ENCODE measurements at regions of chr10 and their contacts with region 1.

Region 1: DNA sequence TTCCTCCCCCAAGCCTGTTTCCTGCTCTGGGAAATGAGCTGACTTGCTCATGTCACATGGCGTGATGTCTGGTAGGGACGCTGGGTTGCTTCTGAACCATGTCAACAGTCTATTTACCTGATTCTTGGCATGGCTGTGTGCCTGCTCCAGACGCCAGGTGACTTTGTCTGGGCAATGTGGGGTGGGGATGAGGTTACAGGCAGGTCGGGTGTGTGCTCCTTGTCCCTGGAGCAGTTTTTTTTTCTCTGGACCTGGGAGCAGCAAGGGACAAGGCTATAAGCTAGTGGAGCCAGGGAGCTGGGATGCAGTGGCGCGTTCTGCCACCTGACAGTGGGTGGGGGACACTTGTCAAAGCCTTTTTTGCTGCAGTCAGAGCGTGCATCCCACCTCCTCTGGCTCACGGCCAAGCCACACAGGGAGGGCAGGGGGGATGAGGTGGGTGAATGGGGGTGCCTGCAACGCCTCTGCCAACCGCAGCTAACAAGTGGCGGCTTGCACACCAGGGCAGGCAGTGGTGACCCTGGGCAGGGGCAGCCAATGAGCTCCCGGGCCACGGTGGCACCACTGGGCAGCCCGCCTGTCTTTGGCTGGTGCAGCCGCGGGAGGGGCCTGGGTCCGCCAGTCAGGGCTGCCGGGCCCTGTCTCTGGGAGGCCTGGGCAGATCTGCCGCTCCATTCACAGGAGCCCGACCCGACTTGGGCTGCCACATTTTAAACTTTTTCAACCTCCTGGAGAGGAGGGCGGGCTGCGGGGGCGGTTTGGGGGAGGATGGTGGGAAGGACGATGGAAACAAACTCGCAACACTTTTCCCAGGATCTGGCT is 22.9 kb downstream of the DNAJB12 start:
- DNase-seq: peak; percentile 86 to 94 (median 93)
- ATAC-seq: peak; percentile 63 to 64
- H3K4me3 ChIP-seq: no peak overlapping the region
- H3K27ac ChIP-seq: peak overlapping the region; percentile 61
- H3K4me1 ChIP-seq: peaks cover 45% of the 10 kb centered on the region
- H3K27me3 ChIP-seq: no peaks in the 10 kb centered on the region

Region 2: GRCh38 chr10:72048450-72049124 is 283.2 kb before region 1 on chr10:
- intact Hi-C with region 1: loop called in 1 of 4 experiments (anchors 5 kb)
- DNase-seq: peak; percentile 89 to 96 (median 96)
- ATAC-seq: peak; percentile 81 to 84
- H3K4me3 ChIP-seq: no peak overlapping the region
- H3K27ac ChIP-seq: no peak overlapping the region
- H3K4me1 ChIP-seq: no peaks in the 10 kb centered on the region
- H3K27me3 ChIP-seq: no peaks in the 10 kb centered on the region

Region 3: DNA sequence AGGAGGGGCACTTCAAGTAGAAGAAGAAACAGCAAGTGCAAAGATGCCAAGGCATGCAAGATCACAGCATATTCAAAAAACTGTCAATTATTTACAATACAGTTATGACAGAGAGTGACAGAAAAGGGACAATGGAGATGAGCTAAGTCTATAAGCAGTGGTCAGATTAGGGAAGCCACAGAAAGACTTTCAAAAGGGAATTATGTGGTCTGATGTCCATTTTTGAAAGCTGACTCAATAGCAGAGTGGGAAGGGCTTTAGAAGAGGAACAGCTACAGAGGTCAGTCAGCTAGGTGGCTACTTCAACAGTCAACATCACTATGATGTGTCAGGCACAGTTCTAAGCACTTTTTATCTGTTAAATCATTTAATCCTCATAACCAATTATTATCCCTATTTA is 198.3 kb before region 1 on chr10:
- intact Hi-C with region 1: loop called (anchors 5 to 10 kb)
- DNase-seq: no peak
- ATAC-seq: peak in 1 of 2 donors; percentile 59
- H3K4me3 ChIP-seq: no peak overlapping the region
- H3K27ac ChIP-seq: no peak overlapping the region
- H3K4me1 ChIP-seq: no peaks in the 10 kb centered on the region
- H3K27me3 ChIP-seq: no peaks in the 10 kb centered on the region

Region 4: DNA sequence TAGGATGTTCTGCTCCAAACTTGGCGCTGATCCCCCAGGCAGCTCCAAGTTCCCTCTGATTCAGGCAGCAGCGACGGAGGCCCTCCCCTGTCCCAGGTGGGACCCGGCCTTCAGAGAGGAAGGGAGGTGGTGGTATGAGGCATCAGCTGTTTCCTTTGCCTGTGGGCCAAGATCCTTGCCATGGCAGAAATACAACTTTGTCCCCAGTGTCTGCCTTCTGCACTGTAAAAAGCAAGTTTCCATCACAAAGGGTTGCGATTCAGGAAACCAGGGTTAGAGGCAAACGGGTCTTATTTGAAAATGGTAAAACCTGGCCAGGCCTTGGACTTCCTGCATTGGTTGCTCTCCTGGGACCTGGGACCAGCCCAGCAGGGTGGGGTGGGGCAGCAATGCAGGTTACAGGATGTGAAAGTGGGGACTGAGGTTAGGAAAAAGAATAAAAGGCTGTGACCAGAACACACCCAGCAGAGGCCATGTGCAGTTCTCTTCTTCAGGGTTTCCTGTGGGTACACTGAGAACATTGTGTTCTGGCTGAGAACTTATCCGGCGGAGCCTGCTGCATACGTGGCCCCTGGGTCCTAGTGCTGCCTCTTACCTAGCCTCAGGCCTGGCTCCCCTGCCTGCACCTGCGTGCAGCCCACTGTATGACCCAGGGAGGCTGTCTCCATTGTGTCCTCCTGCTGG is 83.2 kb before region 1 on chr10:
- intact Hi-C with region 1: loop called in 1 of 4 experiments (anchors 10 kb)
- DNase-seq: peak; percentile 89 to 95 (median 92)
- ATAC-seq: peak; percentile 88 to 90
- H3K4me3 ChIP-seq: no peak overlapping the region
- H3K27ac ChIP-seq: peak overlapping the region; percentile 98
- H3K4me1 ChIP-seq: peaks cover 55% of the 10 kb centered on the region
- H3K27me3 ChIP-seq: no peaks in the 10 kb centered on the region